Adrenal gland (tissue), 19 donors: ENCODE measurements at regions of chr12 and their contacts with region 1.

Region 1: DNA sequence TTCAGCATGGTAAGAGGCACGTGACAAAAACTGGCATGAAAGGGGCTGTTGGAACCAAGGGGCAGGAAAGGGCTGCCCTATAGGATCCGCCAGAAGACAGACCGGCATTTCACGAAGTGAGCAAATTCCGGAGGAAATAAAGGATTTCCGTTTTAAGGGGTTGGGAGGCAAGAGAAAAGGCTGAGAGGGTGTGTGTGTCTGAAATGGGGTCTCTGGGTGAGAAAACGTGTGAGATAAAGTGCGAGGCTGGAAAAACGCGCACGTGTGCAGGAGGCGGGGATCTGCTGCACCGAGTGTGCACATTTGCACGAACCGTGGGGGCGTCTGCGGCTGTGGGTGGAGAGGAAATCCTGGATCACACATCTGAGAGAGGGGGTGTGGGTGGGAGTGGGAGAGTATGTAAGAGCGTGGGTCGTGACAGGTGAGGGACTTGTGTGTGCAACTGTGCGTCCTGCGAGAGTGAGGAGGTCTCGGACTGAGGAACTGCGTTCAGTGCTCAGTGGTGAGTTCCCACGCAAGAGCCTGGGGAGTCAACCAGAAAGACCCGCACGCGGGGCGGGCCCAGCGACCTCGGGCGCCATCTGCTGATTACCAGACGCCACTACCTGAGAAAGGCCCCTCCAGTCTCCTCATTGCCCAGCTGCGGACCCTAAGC is 37.0 kb upstream of the P2RX7 start:
- DNase-seq: peak; percentile 48 to 81 (median 62)
- H3K4me3 ChIP-seq: peak overlapping the region in 1 of 4 donors; percentile 13
- H3K27ac ChIP-seq: no peak overlapping the region
- H3K4me1 ChIP-seq: peaks cover 0 to 10% of the 10 kb centered on the region in 2 donors
- H3K27me3 ChIP-seq: no peaks in the 10 kb centered on the region
- CTCF ChIP-seq: peak; percentile 45 to 78 (median 63)
- POLR2A ChIP-seq: no peak

Region 2: GRCh38 chr12:120346681-120347080 is 749.0 kb before region 1 on chr12:
- intact Hi-C with region 1: no loop called
- DNase-seq: no peak
- H3K4me3 ChIP-seq: no peak overlapping the region
- H3K27ac ChIP-seq: no peak overlapping the region
- H3K4me1 ChIP-seq: peaks cover 0 to 7% of the 10 kb centered on the region in 2 donors
- H3K27me3 ChIP-seq: no peaks in the 10 kb centered on the region
- CTCF ChIP-seq: no peak
- POLR2A ChIP-seq: no peak

Region 3: GRCh38 chr12:120599672-120600552 is 495.8 kb before region 1 on chr12:
- intact Hi-C with region 1: loop called in 1 of 2 experiments (anchors 10 kb)
- DNase-seq: no peak
- H3K4me3 ChIP-seq: no peak overlapping the region
- H3K27ac ChIP-seq: peak overlapping the region in 4 of 5 donors; percentile 64 to 88 (median 80)
- H3K4me1 ChIP-seq: peaks cover 13 to 19% of the 10 kb centered on the region in 2 donors
- H3K27me3 ChIP-seq: no peaks in the 10 kb centered on the region
- CTCF ChIP-seq: no peak
- POLR2A ChIP-seq: no peak

Region 4: GRCh38 chr12:121060149-121061001 is 35.3 kb before region 1 on chr12:
- intact Hi-C with region 1: loop called (anchors 5 kb)
- DNase-seq: peak in 6 of 7 donors; percentile 37 to 75 (median 50)
- H3K4me3 ChIP-seq: peak overlapping the region in 2 of 4 donors; percentile 20 to 46
- H3K27ac ChIP-seq: peak overlapping the region in 4 of 5 donors; percentile 30 to 55 (median 52)
- H3K4me1 ChIP-seq: peaks cover 3 to 5% of the 10 kb centered on the region in 2 donors
- H3K27me3 ChIP-seq: no peaks in the 10 kb centered on the region
- CTCF ChIP-seq: peak; percentile 44 to 59 (median 52)
- POLR2A ChIP-seq: no peak